Activated T-helper 2 cell treated with anti-CD3 and anti-CD28 coated beads, Interferon-gamma antibody, Interleukin-2, Interleukin-4, amounts not matched to agents 10 μg/mL and 5 μg/mL and 100 μg/mL, durations not matched to agents 14 hours and 24 hours and 36 hours (primary cell): ENCODE measurements at regions of chr4 and their contacts with region 1.

Region 1: GRCh38 chr4:83387753-83388676 is 53.4 kb upstream of the HPSE start:
- DNase-seq: peak; percentile 13
- H3K4me3 Mint-ChIP-seq: no peak overlapping the region
- H3K27ac Mint-ChIP-seq: no peak overlapping the region
- H3K4me1 Mint-ChIP-seq: peaks cover 5% of the 10 kb centered on the region
- H3K27me3 Mint-ChIP-seq: peaks cover 5% of the 10 kb centered on the region

Region 2: GRCh38 chr4:83362492-83363329 is 25.3 kb before region 1 on chr4:
- intact Hi-C with region 1: loop called (anchors 1 kb)
- DNase-seq: no peak
- H3K4me3 Mint-ChIP-seq: no peak overlapping the region
- H3K27ac Mint-ChIP-seq: no peak overlapping the region
- H3K4me1 Mint-ChIP-seq: peaks cover 8% of the 10 kb centered on the region
- H3K27me3 Mint-ChIP-seq: peaks cover 9% of the 10 kb centered on the region